PC-9 (cell line): ENCODE measurements at regions of chr3 and their contacts with region 1.

Region 1: GRCh38 chr3:17336291-17336690 is 406.1 kb downstream of the TBC1D5 start:
- DNase-seq: no peak
- H3K4me3 ChIP-seq: no peak overlapping the region
- H3K27ac ChIP-seq: no peak overlapping the region
- H3K4me1 ChIP-seq: no peaks in the 10 kb centered on the region
- H3K27me3 ChIP-seq: no peaks in the 10 kb centered on the region
- CTCF ChIP-seq: no peak

Region 2: GRCh38 chr3:17384567-17385296 is 48.4 kb after region 1 on chr3:
- CTCF ChIA-PET with region 1: no interaction called
- POLR2A ChIA-PET with region 1: interaction called, 10 read pairs
- intact Hi-C with region 1: no loop called
- DNase-seq: no peak
- H3K4me3 ChIP-seq: no peak overlapping the region
- H3K27ac ChIP-seq: no peak overlapping the region
- H3K4me1 ChIP-seq: no peaks in the 10 kb centered on the region
- H3K27me3 ChIP-seq: no peaks in the 10 kb centered on the region
- CTCF ChIP-seq: no peak

Region 3: GRCh38 chr3:17500618-17501017 is 164.3 kb after region 1 on chr3:
- CTCF ChIA-PET with region 1: no interaction called
- POLR2A ChIA-PET with region 1: interaction called, 25 read pairs
- intact Hi-C with region 1: no loop called
- DNase-seq: no peak
- H3K4me3 ChIP-seq: no peak overlapping the region
- H3K27ac ChIP-seq: no peak overlapping the region
- H3K4me1 ChIP-seq: peaks cover 10% of the 10 kb centered on the region
- H3K27me3 ChIP-seq: no peaks in the 10 kb centered on the region
- CTCF ChIP-seq: no peak